ENCODE measurements at regions of chr10 and their contacts with region 1.

Region 1: DNA sequence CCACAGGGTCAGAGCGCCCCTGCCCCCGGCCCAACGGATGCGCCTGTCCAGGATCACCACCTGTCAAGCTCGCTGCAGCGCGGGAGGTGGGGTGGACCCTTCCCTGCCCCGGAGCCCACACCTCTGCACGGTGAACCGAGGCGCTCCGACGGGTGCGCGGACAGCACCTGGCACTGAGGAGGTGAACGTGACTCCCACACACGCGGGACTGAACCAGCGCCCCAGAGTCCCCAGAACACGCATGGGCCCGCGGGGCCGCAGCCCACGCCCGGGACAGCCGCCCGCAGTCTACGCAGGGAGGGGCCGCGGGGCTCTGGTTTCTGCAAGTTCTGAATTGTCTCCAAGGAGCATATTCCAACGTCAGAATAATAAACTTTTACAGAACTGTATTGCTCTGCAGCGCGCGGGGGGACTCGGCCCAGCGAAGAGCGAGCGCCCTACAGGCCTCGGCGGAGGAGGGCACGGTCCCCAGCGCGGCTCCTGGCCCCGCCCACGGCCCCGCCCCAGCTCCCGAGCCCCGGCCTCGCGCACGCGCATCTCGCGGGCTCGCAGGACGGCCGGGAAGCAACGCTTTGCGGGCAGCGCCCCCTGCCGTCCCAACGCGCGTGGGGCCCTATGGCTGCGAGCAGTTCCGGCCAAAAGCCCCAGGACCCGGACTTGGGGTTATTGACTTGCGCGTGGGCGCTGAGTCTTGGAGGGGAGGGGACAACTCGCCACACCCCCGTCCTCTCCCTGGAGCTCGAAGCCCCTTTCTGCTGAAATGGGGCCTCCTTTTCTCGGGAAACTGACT is 29.7 kb downstream of the OAT start:
- DNase-seq: peak; percentile 46
- H3K4me3 ChIP-seq: peak overlapping the region; percentile 30 to 67 (median 50)
- H3K27ac ChIP-seq: peak overlapping the region; percentile 11 to 50 (median 31)
- H3K4me1 ChIP-seq: peaks cover 5 to 15% (median 10%) of the 10 kb centered on the region in 3 donors
- H3K27me3 ChIP-seq: peaks cover 0 to 14% (median 0%) of the 10 kb centered on the region in 4 donors
- CTCF ChIP-seq: peak; percentile 95 to 99 (median 98)
- POLR2A ChIP-seq: peak in 2 of 4 donors; percentile 17 to 24

Region 2: GRCh38 chr10:123994417-123995081 is 394.5 kb before region 1 on chr10:
- intact Hi-C with region 1: loop called (anchors 5 kb)
- DNase-seq: peak; percentile 20
- H3K4me3 ChIP-seq: peak overlapping the region in 3 of 4 donors; percentile 11 to 56 (median 15)
- H3K27ac ChIP-seq: peak overlapping the region in 3 of 4 donors; percentile 6 to 70 (median 70)
- H3K4me1 ChIP-seq: peaks cover 24 to 42% (median 25%) of the 10 kb centered on the region in 3 donors
- H3K27me3 ChIP-seq: peaks cover 0 to 57% (median 13%) of the 10 kb centered on the region in 4 donors
- CTCF ChIP-seq: peak; percentile 99 to 100 (median 99)
- POLR2A ChIP-seq: no peak

Measured in esophagus squamous epithelium (tissue), 5 donors.